Posterior vena cava (tissue), 2 donors: ENCODE measurements at regions of chr17 and their contacts with region 1.

Region 1: GRCh38 chr17:68684949-68685357 is 83.8 kb upstream of the FAM20A start:
- DNase-seq: no peak

Region 2: GRCh38 chr17:68613739-68614298 is 71.1 kb before region 1 on chr17:
- intact Hi-C with region 1: no loop called
- DNase-seq: no peak

Region 3: GRCh38 chr17:68718926-68719325 is 34.0 kb after region 1 on chr17:
- intact Hi-C with region 1: loop called in 1 of 2 experiments (anchors 1 kb)
- DNase-seq: no peak

Region 4: GRCh38 chr17:68924786-68925720 is 240.1 kb after region 1 on chr17:
- intact Hi-C with region 1: no loop called
- DNase-seq: no peak